ENCODE measurements at regions of chr13 and their contacts with region 1.

Region 1: DNA sequence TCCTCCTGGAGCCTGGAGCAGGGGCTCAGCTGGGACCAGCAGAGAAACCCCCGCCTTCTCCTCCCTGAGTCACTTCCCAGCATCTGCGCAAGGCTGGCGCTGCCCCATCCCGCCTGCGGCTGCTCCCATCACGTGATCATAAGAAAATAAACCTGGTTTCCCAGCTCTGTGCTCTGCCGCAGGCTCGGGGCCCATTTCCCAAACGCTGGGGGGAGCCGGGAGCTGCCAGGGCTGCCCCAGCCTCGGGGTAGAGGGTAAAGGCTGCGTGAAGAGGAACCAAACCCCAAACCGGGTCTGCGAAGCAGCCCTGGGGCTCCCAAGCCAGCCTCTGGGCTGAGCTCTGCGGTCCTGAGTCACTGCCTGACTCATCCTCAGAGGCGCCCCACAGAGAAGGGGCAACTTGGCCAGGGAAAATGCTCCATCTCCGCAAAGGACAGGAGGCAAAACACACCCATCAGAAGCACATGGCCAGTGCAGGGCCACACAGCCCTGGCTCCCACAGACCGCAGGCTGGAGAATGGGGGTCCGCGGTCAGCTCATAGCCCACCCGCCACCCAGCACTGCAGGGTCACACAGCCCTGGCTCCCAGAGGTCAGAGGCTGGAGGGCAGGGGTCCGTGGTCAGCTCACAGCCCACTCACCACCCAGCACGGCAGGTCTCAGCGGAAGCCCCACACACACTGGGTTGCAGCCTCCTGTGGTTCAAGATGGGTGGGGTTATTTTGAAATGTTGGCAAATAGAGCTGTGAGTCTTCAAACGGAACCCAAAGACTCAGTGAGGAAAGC is 67.1 kb downstream of the RASA3 start:
- DNase-seq: peak; percentile 91
- ATAC-seq: peak; percentile 85 to 91

Region 2: GRCh38 chr13:114115191-114115671 is 49.9 kb after region 1 on chr13:
- intact Hi-C with region 1: loop called in 1 of 2 experiments (anchors 5 kb)
- DNase-seq: peak; percentile 52
- ATAC-seq: peak; percentile 42 to 44

Measured in left cardiac atrium (tissue), 4 donors.